ENCODE measurements at regions of chr2 and their contacts with region 1.

Region 1: DNA sequence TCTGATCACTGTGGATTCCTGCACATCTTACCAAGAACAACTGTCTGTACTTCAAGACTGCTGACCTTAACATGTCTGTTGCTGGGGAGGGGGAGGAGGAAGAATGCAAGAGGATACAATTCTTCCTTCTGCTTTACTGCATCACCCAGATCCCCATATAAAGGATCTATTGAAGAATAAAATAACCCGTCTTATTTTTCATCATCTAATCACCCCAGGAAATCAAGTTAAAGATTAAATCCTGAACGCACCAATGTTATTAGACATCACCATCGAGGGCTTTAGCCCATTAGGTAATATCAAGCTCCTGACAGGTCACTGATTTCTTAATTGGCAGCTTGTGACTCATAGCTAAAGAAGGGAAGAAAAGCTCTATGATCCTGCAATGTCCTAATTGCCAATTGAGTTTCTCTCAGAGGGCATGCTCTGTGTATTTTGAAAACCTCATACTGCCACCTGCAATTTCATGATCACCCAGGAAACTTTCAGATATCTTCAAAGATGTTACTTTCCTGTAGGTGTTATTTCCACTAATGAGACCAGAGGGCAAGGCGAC is 75.4 kb upstream of the KCNE4 start:
- DNase-seq: no peak
- H3K4me3 ChIP-seq: no peak overlapping the region
- H3K4me3 Mint-ChIP-seq: no peak overlapping the region
- H3K27ac Mint-ChIP-seq: no peak overlapping the region
- H3K4me1 ChIP-seq: no peaks in the 10 kb centered on the region
- H3K4me1 Mint-ChIP-seq: no peaks in the 10 kb centered on the region
- H3K27me3 ChIP-seq: no peaks in the 10 kb centered on the region
- H3K27me3 Mint-ChIP-seq: peaks cover 6% of the 10 kb centered on the region
- CTCF ChIP-seq: no peak

Region 2: GRCh38 chr2:223185638-223186037 is 209.0 kb after region 1 on chr2:
- CTCF ChIA-PET with region 1: no interaction called
- POLR2A ChIA-PET with region 1: no interaction called
- intact Hi-C with region 1: loop called (anchors 5 kb)
- DNase-seq: no peak
- H3K4me3 ChIP-seq: no peak overlapping the region
- H3K4me3 Mint-ChIP-seq: no peak overlapping the region
- H3K27ac Mint-ChIP-seq: no peak overlapping the region
- H3K4me1 ChIP-seq: no peaks in the 10 kb centered on the region
- H3K4me1 Mint-ChIP-seq: peaks cover 6% of the 10 kb centered on the region
- H3K27me3 ChIP-seq: no peaks in the 10 kb centered on the region
- H3K27me3 Mint-ChIP-seq: peaks cover 11% of the 10 kb centered on the region
- CTCF ChIP-seq: no peak

Region 3: GRCh38 chr2:223247136-223247535 is 270.5 kb after region 1 on chr2:
- CTCF ChIA-PET with region 1: no interaction called
- POLR2A ChIA-PET with region 1: no interaction called
- intact Hi-C with region 1: loop called (anchors 5 kb)
- DNase-seq: no peak
- H3K4me3 ChIP-seq: no peak overlapping the region
- H3K4me3 Mint-ChIP-seq: no peak overlapping the region
- H3K27ac Mint-ChIP-seq: no peak overlapping the region
- H3K4me1 ChIP-seq: no peaks in the 10 kb centered on the region
- H3K4me1 Mint-ChIP-seq: no peaks in the 10 kb centered on the region
- H3K27me3 ChIP-seq: no peaks in the 10 kb centered on the region; the same call in 1 of the 2 replicates
- H3K27me3 Mint-ChIP-seq: peaks cover 7% of the 10 kb centered on the region
- CTCF ChIP-seq: peak; percentile 42 to 46

Region 4: DNA sequence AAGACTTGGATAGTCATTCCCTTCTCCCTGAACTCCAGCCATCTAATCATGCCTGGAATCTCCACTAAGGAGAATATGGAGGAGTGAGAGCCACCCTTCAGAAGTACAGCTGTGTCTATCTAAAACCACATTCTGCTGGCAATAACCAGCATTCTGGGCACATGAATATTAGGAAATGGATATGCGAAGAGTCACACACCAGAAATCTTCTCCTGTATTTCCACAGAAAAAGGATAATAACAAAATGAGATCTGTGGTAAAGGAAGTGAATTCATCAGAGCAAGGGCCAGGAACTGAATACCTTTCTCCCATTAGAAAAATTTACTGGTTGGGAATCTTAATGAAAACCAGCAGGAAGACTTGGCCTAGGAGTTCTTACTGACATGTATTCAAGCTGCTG is 406.7 kb after region 1 on chr2:
- CTCF ChIA-PET with region 1: interaction called, 3 read pairs
- POLR2A ChIA-PET with region 1: no interaction called
- intact Hi-C with region 1: loop called (anchors 10 kb)
- DNase-seq: no peak
- H3K4me3 ChIP-seq: no peak overlapping the region
- H3K4me3 Mint-ChIP-seq: no peak overlapping the region
- H3K27ac Mint-ChIP-seq: no peak overlapping the region
- H3K4me1 ChIP-seq: no peaks in the 10 kb centered on the region
- H3K4me1 Mint-ChIP-seq: no peaks in the 10 kb centered on the region
- H3K27me3 ChIP-seq: no peaks in the 10 kb centered on the region
- H3K27me3 Mint-ChIP-seq: peaks cover 19% of the 10 kb centered on the region
- CTCF ChIP-seq: no peak

Region 5: DNA sequence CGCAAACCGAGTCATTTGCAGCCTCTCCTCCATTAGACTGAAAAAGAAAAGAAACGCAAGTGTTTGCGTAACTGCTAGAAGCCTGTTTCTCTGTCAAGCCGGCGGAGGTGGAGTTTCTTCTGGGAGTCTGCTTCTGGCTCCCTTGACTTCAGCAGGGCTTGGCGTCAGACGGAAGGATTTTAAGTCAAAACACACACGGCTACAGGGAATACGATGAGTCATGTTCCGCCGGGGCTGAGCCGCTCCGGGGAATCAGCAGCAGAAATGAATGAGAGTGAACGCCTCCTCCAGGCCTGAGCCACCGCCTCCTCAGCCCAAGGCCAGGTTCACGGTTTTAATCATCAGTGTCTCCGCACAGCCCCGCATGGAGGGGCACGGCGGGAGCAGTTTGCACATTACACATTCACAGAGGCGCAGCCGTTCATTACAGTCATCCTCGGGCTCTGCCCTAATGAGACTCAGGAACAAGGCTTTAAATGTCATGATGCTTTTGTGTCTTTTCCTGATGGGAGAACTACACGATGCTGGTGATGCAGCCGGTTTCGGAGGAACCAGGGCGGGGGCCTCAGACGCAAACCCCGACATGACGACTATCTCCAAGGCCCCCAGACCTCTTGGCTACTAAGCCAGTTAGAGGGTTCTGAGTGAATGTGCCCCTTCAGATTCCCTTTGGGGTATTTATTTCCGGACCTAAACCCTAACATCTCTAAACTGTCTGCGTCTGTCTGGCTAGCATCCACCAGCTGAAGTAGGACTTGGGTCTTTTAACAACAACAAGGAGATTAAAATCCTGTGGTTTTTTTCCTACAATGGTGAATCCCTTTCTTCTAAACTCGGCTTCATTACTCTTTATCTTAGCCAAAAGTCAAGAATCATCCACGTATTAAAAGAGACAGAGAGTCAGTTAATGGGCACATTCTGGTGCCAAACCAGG is 636.7 kb after region 1 on chr2:
- CTCF ChIA-PET with region 1: no interaction called
- POLR2A ChIA-PET with region 1: no interaction called
- intact Hi-C with region 1: loop called (anchors 10 kb)
- DNase-seq: peak; percentile 69 to 78
- H3K4me3 ChIP-seq: peak overlapping the region; percentile 13; the same call in 1 of the 2 replicates
- H3K4me3 Mint-ChIP-seq: peak overlapping the region; percentile 59
- H3K27ac Mint-ChIP-seq: no peak overlapping the region
- H3K4me1 ChIP-seq: peaks cover 3% of the 10 kb centered on the region; the same call in 1 of the 2 replicates
- H3K4me1 Mint-ChIP-seq: peaks cover 8% of the 10 kb centered on the region
- H3K27me3 ChIP-seq: no peaks in the 10 kb centered on the region
- H3K27me3 Mint-ChIP-seq: peaks cover 9% of the 10 kb centered on the region
- CTCF ChIP-seq: no peak